Caco-2 (cell line): ENCODE measurements at regions of chr3 and their contacts with region 1.

Region 1: GRCh38 chr3:61688307-61688984 is 127.1 kb downstream of the PTPRG start:
- DNase-seq: no peak
- H3K4me3 ChIP-seq: no peak overlapping the region
- H3K4me3 Mint-ChIP-seq: no peak overlapping the region
- H3K27ac Mint-ChIP-seq: no peak overlapping the region
- H3K4me1 ChIP-seq: peaks cover 12% of the 10 kb centered on the region
- H3K4me1 Mint-ChIP-seq: peaks cover 26% of the 10 kb centered on the region
- H3K27me3 ChIP-seq: no peaks in the 10 kb centered on the region
- H3K27me3 Mint-ChIP-seq: no peaks in the 10 kb centered on the region
- CTCF ChIP-seq: no peak

Region 2: GRCh38 chr3:61505197-61505596 is 183.2 kb before region 1 on chr3:
- CTCF ChIA-PET with region 1: no interaction called
- POLR2A ChIA-PET with region 1: interaction called, 12 read pairs
- intact Hi-C with region 1: no loop called
- DNase-seq: no peak
- H3K4me3 ChIP-seq: no peak overlapping the region
- H3K4me3 Mint-ChIP-seq: no peak overlapping the region
- H3K27ac Mint-ChIP-seq: no peak overlapping the region
- H3K4me1 ChIP-seq: no peaks in the 10 kb centered on the region
- H3K4me1 Mint-ChIP-seq: no peaks in the 10 kb centered on the region
- H3K27me3 ChIP-seq: no peaks in the 10 kb centered on the region
- H3K27me3 Mint-ChIP-seq: peaks cover 2% of the 10 kb centered on the region
- CTCF ChIP-seq: no peak